Heart left ventricle (tissue), 16 donors: ENCODE measurements at regions of chr2 and their contacts with region 1.

Region 1: DNA sequence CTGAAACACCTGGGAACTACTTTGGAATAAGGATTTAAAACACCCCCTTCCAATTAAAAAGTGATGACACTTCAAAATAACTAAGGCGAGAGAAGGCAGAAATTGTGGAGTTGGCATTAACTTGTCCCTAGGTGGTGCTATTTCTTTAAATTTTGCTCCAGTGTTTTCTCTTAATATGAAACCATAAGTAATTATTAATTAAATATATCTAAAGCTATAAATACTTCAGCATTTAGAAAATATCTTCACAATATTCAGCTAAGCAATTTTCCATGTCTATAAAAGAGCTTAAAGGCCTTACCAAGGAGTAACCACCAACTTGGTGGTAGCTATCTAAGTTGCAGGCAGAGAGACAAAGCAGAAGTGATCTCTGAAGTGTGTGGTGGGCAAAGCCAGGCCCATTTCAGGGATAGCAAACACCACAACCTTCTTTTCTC is 186.8 kb upstream of the PGAP1 start:
- DNase-seq: no peak
- ATAC-seq: no peak
- H3K4me3 ChIP-seq: no peak overlapping the region
- H3K27ac ChIP-seq: peak overlapping the region in 1 of 12 donors; percentile 24
- H3K4me1 ChIP-seq: peaks cover 0 to 23% (median 11%) of the 10 kb centered on the region in 12 donors
- H3K27me3 ChIP-seq: no peaks in the 10 kb centered on the region
- CTCF ChIP-seq: peak; percentile 47 to 78 (median 70)
- POLR2A ChIP-seq: no peak

Region 2: DNA sequence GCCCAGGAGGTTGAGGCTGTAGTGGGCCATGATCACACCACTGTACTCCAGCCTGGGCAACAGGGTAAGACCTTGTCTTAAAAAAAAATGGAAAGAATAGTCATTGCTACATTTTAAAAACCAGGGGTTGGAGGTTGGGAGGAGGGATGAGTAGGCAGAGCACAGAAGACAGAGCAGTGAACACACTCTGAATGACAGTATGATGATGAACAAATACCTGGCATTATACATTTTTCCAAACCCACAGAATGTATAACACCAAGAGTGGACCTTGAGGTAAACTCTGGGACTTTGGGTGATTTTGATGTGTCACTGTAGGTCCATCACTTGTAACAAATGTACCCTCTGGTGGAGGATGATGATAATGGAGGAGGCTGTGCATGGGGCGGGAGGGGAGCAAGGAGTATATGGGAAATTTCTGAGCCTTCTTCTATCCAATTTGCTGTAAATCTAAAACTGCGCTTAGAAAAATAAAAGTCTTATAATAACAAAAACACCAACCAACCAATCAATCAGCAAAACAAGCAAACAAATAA is 75.4 kb before region 1 on chr2:
- intact Hi-C with region 1: loop called in 1 of 10 experiments (anchors 10 kb)
- DNase-seq: no peak
- ATAC-seq: no peak
- H3K4me3 ChIP-seq: no peak overlapping the region
- H3K27ac ChIP-seq: no peak overlapping the region
- H3K4me1 ChIP-seq: peaks cover 0 to 24% (median 7%) of the 10 kb centered on the region in 12 donors
- H3K27me3 ChIP-seq: no peaks in the 10 kb centered on the region
- CTCF ChIP-seq: no peak
- POLR2A ChIP-seq: no peak

Region 3: GRCh38 chr2:197179744-197180498 is 66.6 kb after region 1 on chr2:
- intact Hi-C with region 1: loop called in 1 of 10 experiments (anchors 10 kb)
- DNase-seq: peak in 4 of 5 donors; percentile 36 to 59 (median 49)
- ATAC-seq: peak; percentile 22 to 70 (median 60)
- H3K4me3 ChIP-seq: no peak overlapping the region
- H3K27ac ChIP-seq: peak overlapping the region in 3 of 12 donors; percentile 15 to 60 (median 43)
- H3K4me1 ChIP-seq: peaks cover 0 to 25% (median 14%) of the 10 kb centered on the region in 12 donors
- H3K27me3 ChIP-seq: no peaks in the 10 kb centered on the region
- CTCF ChIP-seq: no peak
- POLR2A ChIP-seq: no peak

Region 4: GRCh38 chr2:197310271-197310985 is 197.1 kb after region 1 on chr2 and contains the start of gene ANKRD44:
- intact Hi-C with region 1: loop called (anchors 2 to 5 kb)
- DNase-seq: peak; percentile 92 to 96 (median 94)
- ATAC-seq: peak; percentile 90 to 99 (median 98)
- H3K4me3 ChIP-seq: peak within 1 kb of the TSS; percentile 56 to 97 (median 72)
- H3K27ac ChIP-seq: peak within 1 kb of the TSS; percentile 43 to 91 (median 70)
- H3K4me1 ChIP-seq: peaks cover 0 to 41% (median 19%) of the 10 kb centered on the region in 12 donors
- H3K27me3 ChIP-seq: no peaks in the 10 kb centered on the region
- CTCF ChIP-seq: peak in 10 of 12 donors; percentile 26 to 59 (median 42)
- POLR2A ChIP-seq: peak in 1 of 2 donors; percentile 58
- total RNA-seq, gene ANKRD44: 4.9 to 30.6 (median 8.6) TPM